MCF 10A (cell line): ENCODE measurements at regions of chr10 and their contacts with region 1.

Region 1: DNA sequence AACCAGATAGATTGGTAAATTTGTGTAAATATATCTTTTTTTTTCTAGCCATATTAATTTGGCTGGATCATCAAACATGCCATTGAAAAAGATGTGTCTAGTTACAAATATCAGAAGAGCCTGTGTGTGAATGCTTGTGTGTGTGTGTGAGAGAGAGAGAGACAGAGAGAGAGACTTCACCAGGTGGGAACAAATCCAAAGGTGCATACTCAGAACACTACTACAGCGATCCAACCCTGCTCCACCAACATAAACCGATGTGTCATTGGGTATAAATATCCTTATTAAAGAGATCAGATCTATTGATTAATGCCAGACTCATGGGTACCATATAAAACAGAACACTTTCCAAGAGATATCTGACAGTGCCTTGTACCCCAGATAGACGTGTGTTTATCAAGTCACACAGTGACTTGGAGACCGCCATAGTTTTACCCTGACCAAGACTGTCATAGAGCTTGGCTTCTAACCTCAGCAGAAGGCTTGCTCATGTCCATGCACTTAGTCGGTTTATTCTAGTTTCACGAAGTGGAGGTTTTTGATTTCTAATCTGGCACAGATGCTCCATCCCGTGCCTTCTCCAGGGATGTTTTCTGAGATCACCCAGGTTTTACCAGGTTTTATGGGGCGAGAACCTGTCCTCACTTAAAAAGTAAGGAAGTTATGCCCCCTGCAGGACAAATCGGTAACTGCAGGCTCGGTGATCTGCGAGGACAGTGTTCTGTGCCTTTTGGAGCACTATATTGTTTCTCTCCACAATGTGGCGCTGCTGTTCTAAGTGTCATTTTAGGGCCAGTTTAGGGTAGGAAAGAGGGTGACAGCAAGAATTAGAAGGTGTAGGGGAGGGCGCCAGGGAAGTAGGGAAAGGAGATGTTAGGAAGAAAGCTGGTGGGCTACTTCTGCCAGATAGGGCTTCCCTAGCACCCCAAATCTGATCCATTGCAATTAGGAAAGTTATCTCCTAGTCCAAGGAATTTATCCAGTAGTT is 29.3 kb upstream of the WNT8B start:
- DNase-seq: peak; percentile 93
- H3K4me3 Mint-ChIP-seq: no peak overlapping the region
- H3K27ac Mint-ChIP-seq: no peak overlapping the region
- H3K4me1 Mint-ChIP-seq: peaks cover 6% of the 10 kb centered on the region
- H3K27me3 Mint-ChIP-seq: no peaks in the 10 kb centered on the region
- CTCF ChIP-seq: peak; percentile 96

Region 2: GRCh38 chr10:100303724-100304319 is 129.7 kb before region 1 on chr10:
- CTCF ChIA-PET with region 1: interaction called, 4 read pairs
- POLR2A ChIA-PET with region 1: no interaction called
- intact Hi-C with region 1: loop called (anchors 1 kb)
- DNase-seq: peak; percentile 14
- H3K4me3 Mint-ChIP-seq: no peak overlapping the region
- H3K27ac Mint-ChIP-seq: no peak overlapping the region
- H3K4me1 Mint-ChIP-seq: no peaks in the 10 kb centered on the region
- H3K27me3 Mint-ChIP-seq: peaks cover 31% of the 10 kb centered on the region
- CTCF ChIP-seq: peak; percentile 49

Region 3: GRCh38 chr10:100338434-100339036 is 95.0 kb before region 1 on chr10:
- CTCF ChIA-PET with region 1: interaction called, 372 read pairs
- POLR2A ChIA-PET with region 1: interaction called, 33 read pairs
- intact Hi-C with region 1: loop called (anchors 1 kb)
- DNase-seq: peak; percentile 70
- H3K4me3 Mint-ChIP-seq: no peak overlapping the region
- H3K27ac Mint-ChIP-seq: no peak overlapping the region
- H3K4me1 Mint-ChIP-seq: peaks cover 13% of the 10 kb centered on the region
- H3K27me3 Mint-ChIP-seq: peaks cover 15% of the 10 kb centered on the region
- CTCF ChIP-seq: peak; percentile 87

Region 4: DNA sequence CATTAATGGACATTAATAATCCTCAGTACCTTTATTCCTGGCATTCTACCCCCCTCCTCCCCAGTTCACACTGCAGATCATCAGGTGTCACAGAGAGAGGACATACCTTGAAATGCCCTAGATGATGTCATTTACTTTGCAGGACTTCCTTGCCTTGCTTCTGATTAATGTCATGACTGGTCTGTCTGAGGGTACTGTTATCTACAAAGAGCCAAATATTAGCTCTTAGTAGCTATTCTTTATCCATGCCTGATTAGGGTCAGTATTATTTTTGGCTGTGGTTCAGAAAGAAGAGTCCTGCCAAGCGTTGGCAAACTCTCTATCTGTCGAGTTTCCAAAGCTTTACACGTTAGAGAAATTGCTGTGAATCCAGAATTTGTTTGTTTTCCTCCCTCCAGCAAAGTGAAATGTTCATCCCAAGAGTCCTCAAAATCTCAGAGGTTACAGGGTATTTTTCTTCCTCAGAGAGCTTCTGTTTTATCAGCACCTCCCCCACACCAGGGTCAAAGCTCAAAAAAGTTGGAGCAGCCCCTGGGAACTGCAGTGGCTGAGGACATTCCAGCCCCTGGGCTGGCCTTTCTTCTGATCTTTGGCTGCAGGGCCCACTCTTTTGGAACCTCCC is 73.9 kb before region 1 on chr10:
- CTCF ChIA-PET with region 1: interaction called, 12 read pairs
- POLR2A ChIA-PET with region 1: interaction called, 4 read pairs
- intact Hi-C with region 1: no loop called
- DNase-seq: no peak
- H3K4me3 Mint-ChIP-seq: no peak overlapping the region
- H3K27ac Mint-ChIP-seq: peak overlapping the region; percentile 43
- H3K4me1 Mint-ChIP-seq: peaks cover 69% of the 10 kb centered on the region
- H3K27me3 Mint-ChIP-seq: no peaks in the 10 kb centered on the region
- CTCF ChIP-seq: no peak

Region 5: DNA sequence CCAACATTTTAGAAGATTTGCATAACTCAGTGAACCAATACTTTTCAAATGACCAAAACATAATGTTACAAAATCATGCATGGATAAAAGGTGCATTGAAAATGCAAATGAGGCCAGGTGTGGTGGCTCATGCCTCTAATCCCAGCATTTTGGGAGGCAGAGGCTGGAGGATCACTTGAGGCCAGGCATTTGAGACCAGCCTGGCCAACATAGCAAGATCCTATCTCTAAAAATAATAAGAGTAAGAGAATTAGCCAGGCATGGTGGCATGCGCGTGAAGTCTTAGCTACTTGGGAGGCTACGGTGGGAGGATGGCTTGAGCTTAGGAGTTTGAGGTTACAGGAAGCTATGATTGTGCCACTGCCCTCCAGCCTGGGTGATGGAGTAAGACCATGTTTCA is 53.1 kb before region 1 on chr10:
- CTCF ChIA-PET with region 1: interaction called, 10 read pairs
- POLR2A ChIA-PET with region 1: interaction called, 6 read pairs
- intact Hi-C with region 1: no loop called
- DNase-seq: no peak
- H3K4me3 Mint-ChIP-seq: no peak overlapping the region
- H3K27ac Mint-ChIP-seq: no peak overlapping the region
- H3K4me1 Mint-ChIP-seq: no peaks in the 10 kb centered on the region
- H3K27me3 Mint-ChIP-seq: no peaks in the 10 kb centered on the region
- CTCF ChIP-seq: no peak

Region 6: GRCh38 chr10:100508691-100509150 is 75.2 kb after region 1 on chr10:
- CTCF ChIA-PET with region 1: interaction called, 18 read pairs
- POLR2A ChIA-PET with region 1: no interaction called
- intact Hi-C with region 1: loop called (anchors 1 kb)
- DNase-seq: peak; percentile 59
- H3K4me3 Mint-ChIP-seq: no peak overlapping the region
- H3K27ac Mint-ChIP-seq: no peak overlapping the region
- H3K4me1 Mint-ChIP-seq: no peaks in the 10 kb centered on the region
- H3K27me3 Mint-ChIP-seq: no peaks in the 10 kb centered on the region
- CTCF ChIP-seq: peak; percentile 62

Region 7: DNA sequence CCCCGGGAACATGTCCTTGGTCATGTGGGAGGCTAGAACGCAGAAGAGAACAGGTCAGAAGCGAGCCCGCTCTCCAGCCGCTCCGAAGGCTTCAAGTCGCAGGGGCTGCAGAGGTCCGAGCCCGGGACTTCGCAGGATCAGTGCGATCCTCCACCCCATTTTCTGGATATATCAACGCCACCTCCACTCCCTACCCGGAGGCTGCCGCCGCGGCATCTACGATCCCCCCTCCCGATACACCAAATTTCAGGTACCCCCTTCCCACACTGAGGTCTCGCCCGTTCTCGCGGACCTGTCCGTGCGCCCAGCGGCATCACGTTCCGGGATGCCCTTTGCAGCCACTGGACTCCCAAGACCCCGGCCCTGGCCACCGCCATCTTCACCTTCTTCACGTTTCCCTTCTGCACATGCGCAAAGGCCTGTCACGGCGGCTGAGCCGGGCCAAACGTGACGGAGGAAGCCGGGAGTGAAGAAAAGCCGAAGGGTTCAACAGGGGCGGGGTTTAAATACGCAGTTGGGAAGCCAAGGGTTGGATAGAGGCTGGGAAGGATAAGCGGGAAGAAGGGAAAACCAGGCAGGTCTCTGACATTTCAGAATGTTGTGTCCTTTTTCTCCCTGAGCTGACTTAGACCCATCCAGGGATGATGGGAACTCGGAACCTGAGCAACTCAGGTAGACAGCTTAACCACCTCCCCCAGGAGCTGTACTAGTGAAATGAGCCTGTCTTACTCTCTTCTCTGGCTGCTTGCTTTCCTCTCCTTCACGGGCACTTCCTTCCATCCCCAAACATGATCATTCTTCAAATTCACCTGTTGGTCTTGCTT is 96.1 kb after region 1 on chr10 and contains the start of gene NDUFB8:
- CTCF ChIA-PET with region 1: interaction called, 17 read pairs
- POLR2A ChIA-PET with region 1: no interaction called
- intact Hi-C with region 1: no loop called
- DNase-seq: peak; percentile 82
- H3K4me3 Mint-ChIP-seq: peak within 1 kb of the TSS; percentile 90
- H3K27ac Mint-ChIP-seq: peak within 1 kb of the TSS; percentile 94
- H3K4me1 Mint-ChIP-seq: peaks cover 12% of the 10 kb centered on the region
- H3K27me3 Mint-ChIP-seq: no peaks in the 10 kb centered on the region
- CTCF ChIP-seq: no peak
- total RNA-seq, gene NDUFB8: 194 and 197 TPM in 2 replicates